ENCODE measurements at regions of chr2 and their contacts with region 1.

Region 1: GRCh38 chr2:18378020-18378653 is 182.3 kb downstream of the RDH14 start:
- DNase-seq: peak; percentile 68
- ATAC-seq: peak; percentile 64; the same call in 1 of the 2 replicates
- H3K4me3 ChIP-seq: no peak overlapping the region
- H3K27ac ChIP-seq: no peak overlapping the region
- H3K4me1 ChIP-seq: no peaks in the 10 kb centered on the region
- H3K27me3 ChIP-seq: peaks cover 10% of the 10 kb centered on the region; the same call in 1 of the 2 replicates
- CTCF ChIP-seq: peak; percentile 92

Region 2: DNA sequence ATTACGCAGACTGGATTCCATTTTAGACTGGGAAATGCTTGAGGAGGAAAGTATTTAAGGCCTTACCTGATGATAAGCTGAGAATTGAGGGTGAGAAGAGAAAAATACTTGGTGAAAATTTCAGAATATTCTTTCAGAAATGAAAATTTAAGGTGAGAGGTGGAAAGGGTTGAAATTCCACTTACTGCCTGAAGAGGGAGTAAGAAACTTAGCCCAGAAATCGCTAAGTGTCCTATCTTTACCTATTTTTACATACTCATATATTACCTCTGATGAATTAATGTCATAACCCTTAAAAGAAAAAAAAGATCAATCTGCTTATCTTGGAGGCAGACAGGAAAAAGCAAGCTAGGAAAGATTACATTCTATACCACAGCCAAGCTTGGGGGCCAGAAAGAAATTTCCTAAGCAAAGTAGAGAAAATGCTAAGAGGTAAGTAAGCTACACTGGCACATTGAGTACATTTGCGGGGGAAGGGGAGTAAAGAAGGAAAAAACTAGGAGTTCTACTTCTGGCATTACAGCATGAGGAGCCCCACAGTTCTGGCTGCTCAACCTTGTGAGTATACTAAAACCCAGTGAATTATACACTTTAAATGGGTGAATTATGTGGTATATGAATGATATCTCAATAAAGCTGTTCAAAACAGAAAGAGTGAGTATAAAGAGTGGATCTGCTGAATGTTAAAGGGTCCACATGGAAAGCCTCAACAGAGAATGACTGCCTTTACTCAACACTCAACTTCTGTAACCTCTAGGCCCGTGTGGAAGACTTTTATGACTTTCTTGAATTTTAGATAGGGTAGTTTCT is 658.4 kb before region 1 on chr2:
- CTCF ChIA-PET with region 1: no interaction called
- POLR2A ChIA-PET with region 1: no interaction called
- intact Hi-C with region 1: loop called (anchors 1 kb)
- DNase-seq: peak; percentile 47
- ATAC-seq: peak; percentile 46
- H3K4me3 ChIP-seq: no peak overlapping the region
- H3K27ac ChIP-seq: no peak overlapping the region
- H3K4me1 ChIP-seq: no peaks in the 10 kb centered on the region
- H3K27me3 ChIP-seq: no peaks in the 10 kb centered on the region
- CTCF ChIP-seq: peak; percentile 76

Region 3: GRCh38 chr2:17851731-17852585 is 526.2 kb before region 1 on chr2:
- CTCF ChIA-PET with region 1: no interaction called
- POLR2A ChIA-PET with region 1: no interaction called
- intact Hi-C with region 1: loop called (anchors 1 kb)
- DNase-seq: peak; percentile 79
- ATAC-seq: peak; percentile 88
- H3K4me3 ChIP-seq: no peak overlapping the region
- H3K27ac ChIP-seq: no peak overlapping the region
- H3K4me1 ChIP-seq: no peaks in the 10 kb centered on the region
- H3K27me3 ChIP-seq: peaks cover 3% of the 10 kb centered on the region; the same call in 1 of the 2 replicates
- CTCF ChIP-seq: peak; percentile 92

Region 4: DNA sequence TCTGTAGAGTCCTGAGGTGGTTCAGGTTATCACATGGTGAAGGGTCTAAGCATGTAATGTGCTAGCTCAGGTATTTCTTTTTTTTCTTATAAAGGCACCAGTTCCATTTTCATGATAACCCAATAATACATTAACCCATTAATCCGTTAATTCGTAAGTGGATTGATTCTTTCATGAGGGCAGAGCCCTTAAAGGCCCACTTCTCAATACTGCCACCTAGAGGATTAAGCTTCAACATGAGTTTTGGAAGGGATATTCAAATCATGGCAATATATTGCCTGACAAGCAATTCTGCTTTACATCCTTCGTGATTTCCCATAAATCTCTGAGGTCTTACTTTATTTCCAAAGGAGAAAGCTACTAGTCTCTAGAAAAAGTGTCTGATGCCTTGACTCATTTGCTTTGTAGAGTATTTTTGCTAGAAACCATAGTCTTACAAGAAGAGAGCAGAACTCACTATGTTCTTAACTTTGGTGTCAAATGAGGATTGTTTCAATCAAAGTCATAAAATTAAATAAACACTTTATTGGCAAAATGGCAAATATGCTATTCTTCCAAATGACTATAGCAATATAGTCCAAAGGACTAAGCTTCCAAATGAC is 228.4 kb before region 1 on chr2:
- CTCF ChIA-PET with region 1: no interaction called
- POLR2A ChIA-PET with region 1: no interaction called
- intact Hi-C with region 1: no loop called
- DNase-seq: peak; percentile 81
- ATAC-seq: peak; percentile 37; the same call in 1 of the 2 replicates
- H3K4me3 ChIP-seq: no peak overlapping the region
- H3K27ac ChIP-seq: no peak overlapping the region
- H3K4me1 ChIP-seq: peaks cover 10% of the 10 kb centered on the region
- H3K27me3 ChIP-seq: no peaks in the 10 kb centered on the region; the same call in 1 of the 2 replicates
- CTCF ChIP-seq: peak; percentile 83

Region 5: DNA sequence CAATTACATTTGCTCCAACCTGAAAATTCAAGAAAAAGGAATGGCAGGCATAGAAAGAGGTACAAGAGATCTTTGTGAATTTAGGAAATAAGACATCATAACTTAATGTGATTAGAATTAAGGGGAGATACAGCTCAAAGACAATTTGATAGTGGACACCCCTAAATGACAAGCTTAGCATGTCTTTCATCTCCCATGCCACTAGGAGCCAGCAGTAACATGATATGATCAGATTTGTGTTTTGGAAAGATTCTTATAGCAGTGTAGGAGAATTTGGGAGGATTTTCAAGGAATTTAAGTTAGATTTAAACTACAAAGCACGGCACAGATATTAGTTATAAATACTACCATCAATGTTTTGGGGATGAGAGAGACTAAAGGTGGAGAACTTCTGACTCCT is 158.5 kb before region 1 on chr2:
- CTCF ChIA-PET with region 1: interaction called, 3 read pairs
- POLR2A ChIA-PET with region 1: no interaction called
- intact Hi-C with region 1: loop called (anchors 1 kb)
- DNase-seq: no peak
- ATAC-seq: no peak
- H3K4me3 ChIP-seq: no peak overlapping the region
- H3K27ac ChIP-seq: no peak overlapping the region
- H3K4me1 ChIP-seq: no peaks in the 10 kb centered on the region
- H3K27me3 ChIP-seq: no peaks in the 10 kb centered on the region; the same call in 1 of the 2 replicates
- CTCF ChIP-seq: peak; percentile 34; the same call in 1 of the 2 replicates